ENCODE measurements at regions of chr22 and their contacts with region 1.

Region 1: GRCh38 chr22:36856121-36856791 is 4.5 kb upstream of the NCF4 start:
- DNase-seq: peak; percentile 73 to 92
- H3K4me3 ChIP-seq: no peak overlapping the region
- H3K4me3 Mint-ChIP-seq: no peak overlapping the region
- H3K27ac Mint-ChIP-seq: no peak overlapping the region
- H3K4me1 ChIP-seq: no peaks in the 10 kb centered on the region
- H3K4me1 Mint-ChIP-seq: peaks cover 6% of the 10 kb centered on the region
- H3K27me3 ChIP-seq: peaks cover 1% of the 10 kb centered on the region; the same call in 1 of the 2 replicates
- H3K27me3 Mint-ChIP-seq: peaks cover 9% of the 10 kb centered on the region
- CTCF ChIP-seq: peak; percentile 100

Region 2: GRCh38 chr22:36775964-36776669 is 80.1 kb before region 1 on chr22 and contains the start of gene IFT27:
- CTCF ChIA-PET with region 1: interaction called, 20 read pairs
- POLR2A ChIA-PET with region 1: no interaction called
- intact Hi-C with region 1: no loop called
- DNase-seq: peak; percentile 97 to 99
- H3K4me3 ChIP-seq: peak within 1 kb of the TSS; percentile 68
- H3K4me3 Mint-ChIP-seq: peak within 1 kb of the TSS; percentile 81
- H3K27ac Mint-ChIP-seq: peak within 1 kb of the TSS; percentile 57
- H3K4me1 ChIP-seq: 0 out of 2 replicates have a peak, but pooled peaks cover 5% of the 10 kb centered on the region
- H3K4me1 Mint-ChIP-seq: peaks cover 5% of the 10 kb centered on the region
- H3K27me3 ChIP-seq: no peaks in the 10 kb centered on the region
- H3K27me3 Mint-ChIP-seq: peaks cover 4% of the 10 kb centered on the region
- CTCF ChIP-seq: no peak
- total RNA-seq, gene IFT27: 8.3 and 9.2 TPM in 2 replicates

Region 3: GRCh38 chr22:36781656-36782627 is 74.3 kb before region 1 on chr22:
- CTCF ChIA-PET with region 1: interaction called, 8 read pairs
- POLR2A ChIA-PET with region 1: no interaction called
- intact Hi-C with region 1: loop called (anchors 1 kb)
- DNase-seq: peak; percentile 70 to 84
- H3K4me3 ChIP-seq: no peak overlapping the region
- H3K4me3 Mint-ChIP-seq: no peak overlapping the region
- H3K27ac Mint-ChIP-seq: no peak overlapping the region
- H3K4me1 ChIP-seq: no peaks in the 10 kb centered on the region
- H3K4me1 Mint-ChIP-seq: no peaks in the 10 kb centered on the region
- H3K27me3 ChIP-seq: no peaks in the 10 kb centered on the region
- H3K27me3 Mint-ChIP-seq: peaks cover 31% of the 10 kb centered on the region
- CTCF ChIP-seq: peak; percentile 87 to 90

Region 4: DNA sequence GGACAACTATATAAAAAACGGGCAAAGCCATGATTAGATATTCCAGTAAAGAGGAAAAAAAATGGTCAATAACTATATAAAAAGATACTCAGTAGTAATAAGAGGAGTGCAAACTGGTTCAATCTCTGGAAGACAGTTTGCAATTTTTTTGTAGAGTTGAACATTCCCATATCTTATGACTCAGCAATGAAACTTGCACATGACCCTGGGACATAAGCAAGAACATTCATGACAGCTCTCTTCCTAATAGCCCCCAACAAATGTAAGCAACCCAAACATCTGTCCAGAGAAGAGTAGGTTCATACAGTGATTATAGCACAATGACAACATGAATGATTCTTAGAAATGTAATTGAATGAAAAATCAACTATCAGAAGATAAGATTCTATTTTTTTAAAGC is 35.4 kb after region 1 on chr22:
- CTCF ChIA-PET with region 1: no interaction called
- POLR2A ChIA-PET with region 1: no interaction called
- intact Hi-C with region 1: no loop called
- DNase-seq: no peak
- H3K4me3 ChIP-seq: no peak overlapping the region
- H3K4me3 Mint-ChIP-seq: no peak overlapping the region
- H3K27ac Mint-ChIP-seq: no peak overlapping the region
- H3K4me1 ChIP-seq: no peaks in the 10 kb centered on the region
- H3K4me1 Mint-ChIP-seq: no peaks in the 10 kb centered on the region
- H3K27me3 ChIP-seq: no peaks in the 10 kb centered on the region
- H3K27me3 Mint-ChIP-seq: peaks cover 17% of the 10 kb centered on the region
- CTCF ChIP-seq: no peak

Region 5: DNA sequence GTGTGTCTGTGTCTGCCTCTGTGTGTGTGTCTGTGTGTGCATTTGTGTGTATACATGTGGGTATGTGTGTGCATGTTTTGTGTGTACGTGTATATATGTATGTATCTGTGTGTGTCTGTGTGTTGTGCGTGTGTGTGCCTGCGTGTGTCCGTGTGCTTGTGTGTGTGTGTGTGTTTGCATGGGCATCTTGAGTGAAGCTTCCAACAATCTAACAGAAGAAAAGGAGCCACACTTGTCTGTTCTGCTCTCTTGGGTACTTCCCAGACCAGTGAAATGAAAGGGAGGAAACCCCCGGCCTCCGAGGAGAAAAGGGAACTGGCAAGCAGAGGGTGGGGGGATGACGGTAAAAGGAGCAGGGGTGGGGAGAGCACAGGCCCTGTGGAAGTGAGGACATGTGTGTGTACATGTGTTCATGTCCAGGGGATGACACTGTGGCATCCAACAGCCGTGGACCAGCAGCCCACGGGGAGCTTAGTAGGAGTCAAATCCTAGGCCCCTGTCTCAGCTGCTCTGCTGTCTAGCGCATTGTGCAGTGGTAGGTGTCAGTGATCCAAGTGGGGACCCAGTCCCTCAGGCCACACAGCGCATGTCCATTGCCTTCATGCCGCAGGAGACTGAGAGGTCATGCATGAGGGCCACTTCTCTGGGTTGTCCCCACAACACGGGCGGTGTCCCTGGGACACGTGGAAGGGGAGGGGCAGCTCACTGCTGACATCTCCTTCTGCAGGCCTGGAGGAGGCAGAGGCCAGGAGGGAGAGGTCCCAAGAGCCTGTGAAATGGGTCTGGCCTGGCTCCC is 65.3 kb after region 1 on chr22:
- CTCF ChIA-PET with region 1: no interaction called
- POLR2A ChIA-PET with region 1: no interaction called
- intact Hi-C with region 1: loop called (anchors 10 kb)
- DNase-seq: no peak
- H3K4me3 ChIP-seq: no peak overlapping the region
- H3K4me3 Mint-ChIP-seq: no peak overlapping the region
- H3K27ac Mint-ChIP-seq: no peak overlapping the region
- H3K4me1 ChIP-seq: no peaks in the 10 kb centered on the region
- H3K4me1 Mint-ChIP-seq: no peaks in the 10 kb centered on the region
- H3K27me3 ChIP-seq: no peaks in the 10 kb centered on the region
- H3K27me3 Mint-ChIP-seq: peaks cover 32% of the 10 kb centered on the region
- CTCF ChIP-seq: no peak

Region 6: GRCh38 chr22:36940676-36941075 is 84.4 kb after region 1 on chr22:
- CTCF ChIA-PET with region 1: no interaction called
- POLR2A ChIA-PET with region 1: no interaction called
- intact Hi-C with region 1: no loop called
- DNase-seq: no peak
- H3K4me3 ChIP-seq: no peak overlapping the region
- H3K4me3 Mint-ChIP-seq: no peak overlapping the region
- H3K27ac Mint-ChIP-seq: no peak overlapping the region
- H3K4me1 ChIP-seq: no peaks in the 10 kb centered on the region
- H3K4me1 Mint-ChIP-seq: no peaks in the 10 kb centered on the region
- H3K27me3 ChIP-seq: no peaks in the 10 kb centered on the region; the same call in 1 of the 2 replicates
- H3K27me3 Mint-ChIP-seq: peaks cover 25% of the 10 kb centered on the region
- CTCF ChIP-seq: no peak